Activated CD4-positive, alpha-beta T cell treated with anti-CD3 and anti-CD28 coated beads for 36 hours (primary cell): ENCODE measurements at regions of chr1 and their contacts with region 1.

Region 1: DNA sequence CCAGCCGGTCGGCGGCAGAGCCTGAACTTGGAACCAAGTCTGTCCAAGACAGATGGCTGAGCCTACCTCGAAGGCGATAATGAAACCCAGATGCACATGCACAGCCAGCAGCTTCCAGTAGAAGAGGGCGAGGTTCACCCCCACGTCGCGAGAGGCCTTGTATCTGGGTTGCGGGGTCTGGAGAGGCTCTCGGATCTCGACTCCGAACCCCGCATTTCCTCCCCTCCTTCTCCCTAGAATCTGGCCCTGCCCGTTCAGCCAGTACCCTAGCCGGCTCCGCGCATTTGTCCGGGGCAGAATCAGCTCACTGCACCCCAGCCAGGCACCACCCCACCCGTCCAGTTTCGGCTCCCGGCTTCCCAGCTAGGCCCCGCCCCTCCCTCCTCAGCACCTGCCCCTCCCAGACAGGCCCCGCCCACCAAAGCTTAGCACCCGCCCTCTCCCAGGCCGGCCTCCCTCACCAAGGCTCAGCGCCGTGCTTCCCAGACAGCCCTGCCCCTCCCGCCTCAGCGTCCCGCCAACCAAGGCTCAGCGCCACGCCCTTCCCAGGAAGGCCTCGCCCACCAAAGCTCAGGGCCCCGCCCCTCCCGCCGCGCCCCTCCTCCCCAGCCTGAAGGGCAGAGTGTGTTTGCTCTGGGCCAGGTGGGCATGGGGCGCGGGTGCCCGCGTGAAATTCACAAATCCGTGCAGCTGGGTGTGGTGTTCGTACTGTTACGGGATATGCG is 4.8 kb upstream of the ARHGEF19 start:
- DNase-seq: peak; percentile 98
- ATAC-seq: peak; percentile 98
- H3K4me3 Mint-ChIP-seq: peak overlapping the region; percentile 73
- H3K27ac Mint-ChIP-seq: peak overlapping the region; percentile 20
- H3K4me1 Mint-ChIP-seq: peaks cover 20% of the 10 kb centered on the region
- H3K27me3 Mint-ChIP-seq: no peaks in the 10 kb centered on the region

Region 2: GRCh38 chr1:15765495-15766194 is 451.6 kb before region 1 on chr1:
- CTCF ChIA-PET with region 1: no interaction called
- POLR2A ChIA-PET with region 1: no interaction called
- intact Hi-C with region 1: no loop called
- DNase-seq: no peak
- ATAC-seq: no peak
- H3K4me3 Mint-ChIP-seq: no peak overlapping the region
- H3K27ac Mint-ChIP-seq: no peak overlapping the region
- H3K4me1 Mint-ChIP-seq: no peaks in the 10 kb centered on the region
- H3K27me3 Mint-ChIP-seq: peaks cover 6% of the 10 kb centered on the region

Region 3: GRCh38 chr1:16038620-16038912 is 178.7 kb before region 1 on chr1:
- CTCF ChIA-PET with region 1: no interaction called
- POLR2A ChIA-PET with region 1: no interaction called
- intact Hi-C with region 1: no loop called
- DNase-seq: no peak
- ATAC-seq: no peak
- H3K4me3 Mint-ChIP-seq: no peak overlapping the region
- H3K27ac Mint-ChIP-seq: no peak overlapping the region
- H3K4me1 Mint-ChIP-seq: no peaks in the 10 kb centered on the region
- H3K27me3 Mint-ChIP-seq: no peaks in the 10 kb centered on the region

Region 4: GRCh38 chr1:16236511-16237342 is 19.5 kb after region 1 on chr1 and contains the start of gene CPLANE2:
- CTCF ChIA-PET with region 1: interaction called, 4 read pairs
- POLR2A ChIA-PET with region 1: interaction called, 8 read pairs
- intact Hi-C with region 1: loop called (anchors 1 to 2 kb)
- DNase-seq: peak; percentile 98
- ATAC-seq: peak; percentile 85
- H3K4me3 Mint-ChIP-seq: peak within 1 kb of the TSS; percentile 81
- H3K27ac Mint-ChIP-seq: peak within 1 kb of the TSS; percentile 85
- H3K4me1 Mint-ChIP-seq: peaks cover 23% of the 10 kb centered on the region
- H3K27me3 Mint-ChIP-seq: no peaks in the 10 kb centered on the region
- total RNA-seq, gene CPLANE2: 2.4 to 3.7 TPM